ENCODE measurements at regions of chr2 and their contacts with region 1.

Region 1: GRCh38 chr2:143357966-143358365 is 228.7 kb downstream of the ARHGAP15 start:
- DNase-seq: no peak
- ATAC-seq: no peak
- H3K4me3 ChIP-seq: no peak overlapping the region
- H3K4me3 Mint-ChIP-seq: no peak overlapping the region
- H3K27ac ChIP-seq: no peak overlapping the region
- H3K27ac Mint-ChIP-seq: no peak overlapping the region
- H3K4me1 ChIP-seq: peaks cover 5% of the 10 kb centered on the region
- H3K4me1 Mint-ChIP-seq: peaks cover 46% of the 10 kb centered on the region
- H3K27me3 ChIP-seq: no peaks in the 10 kb centered on the region
- H3K27me3 Mint-ChIP-seq: no peaks in the 10 kb centered on the region
- CTCF ChIP-seq: no peak

Region 2: GRCh38 chr2:143345887-143346787 is 11.8 kb before region 1 on chr2:
- CTCF ChIA-PET with region 1: interaction called, 4 read pairs
- POLR2A ChIA-PET with region 1: no interaction called
- intact Hi-C with region 1: loop called in 1 of 2 experiments (anchors 1 kb)
- DNase-seq: no peak
- ATAC-seq: no peak
- H3K4me3 ChIP-seq: no peak overlapping the region
- H3K4me3 Mint-ChIP-seq: no peak overlapping the region
- H3K27ac ChIP-seq: no peak overlapping the region
- H3K27ac Mint-ChIP-seq: no peak overlapping the region
- H3K4me1 ChIP-seq: no peaks in the 10 kb centered on the region
- H3K4me1 Mint-ChIP-seq: peaks cover 50% of the 10 kb centered on the region
- H3K27me3 ChIP-seq: no peaks in the 10 kb centered on the region
- H3K27me3 Mint-ChIP-seq: no peaks in the 10 kb centered on the region
- CTCF ChIP-seq: no peak

Region 3: GRCh38 chr2:143410082-143410940 is 52.3 kb after region 1 on chr2:
- CTCF ChIA-PET with region 1: no interaction called
- POLR2A ChIA-PET with region 1: no interaction called
- intact Hi-C with region 1: no loop called
- DNase-seq: no peak
- ATAC-seq: no peak
- H3K4me3 ChIP-seq: no peak overlapping the region
- H3K4me3 Mint-ChIP-seq: no peak overlapping the region
- H3K27ac ChIP-seq: no peak overlapping the region
- H3K27ac Mint-ChIP-seq: no peak overlapping the region
- H3K4me1 ChIP-seq: no peaks in the 10 kb centered on the region
- H3K4me1 Mint-ChIP-seq: peaks cover 43% of the 10 kb centered on the region
- H3K27me3 ChIP-seq: no peaks in the 10 kb centered on the region
- H3K27me3 Mint-ChIP-seq: no peaks in the 10 kb centered on the region
- CTCF ChIP-seq: no peak